ENCODE measurements at regions of chr4 and their contacts with region 1.

Region 1: DNA sequence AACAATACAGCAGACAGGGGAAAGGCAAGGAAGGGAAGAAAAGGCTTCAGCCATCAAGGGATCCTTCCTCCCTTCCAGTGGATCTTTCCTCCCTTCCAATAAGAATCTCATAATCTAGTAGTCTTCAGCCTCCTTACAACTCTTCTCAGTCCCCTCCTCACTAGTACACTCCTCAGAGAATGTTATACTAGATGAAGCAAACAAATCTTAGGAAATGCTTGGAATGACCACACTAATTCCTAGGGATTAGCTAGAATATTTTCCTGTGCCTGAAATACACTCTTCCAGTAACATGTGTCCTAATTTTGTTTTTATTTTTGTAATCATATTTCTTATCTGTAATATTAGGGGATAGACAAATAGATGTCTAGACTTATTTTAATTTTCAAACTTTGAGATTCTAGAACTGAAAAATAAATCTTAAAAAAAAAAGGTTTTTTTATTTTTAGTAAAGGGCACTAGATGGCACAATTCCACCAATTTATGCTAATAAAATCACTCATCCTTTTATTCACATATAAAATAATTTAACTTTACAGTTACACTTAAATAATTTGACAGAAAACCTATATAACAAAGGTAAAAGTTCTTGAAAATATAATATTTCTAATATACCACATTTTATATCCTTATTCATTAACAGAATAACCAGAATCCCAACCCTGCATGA is 7.0 kb upstream of the STPG2 start:
- DNase-seq: peak in 1 of 5 donors; percentile 3
- H3K4me3 ChIP-seq: no peak overlapping the region
- H3K4me3 Mint-ChIP-seq: no peak overlapping the region
- H3K27ac ChIP-seq: no peak overlapping the region
- H3K27ac Mint-ChIP-seq: no peak overlapping the region
- H3K4me1 ChIP-seq: peaks cover 16% of the 10 kb centered on the region
- H3K4me1 Mint-ChIP-seq: peaks cover 5 to 18% (median 9%) of the 10 kb centered on the region in 4 donors
- H3K27me3 ChIP-seq: no peaks in the 10 kb centered on the region
- H3K27me3 Mint-ChIP-seq: peaks cover 0 to 1% of the 10 kb centered on the region in 2 donors

Region 2: DNA sequence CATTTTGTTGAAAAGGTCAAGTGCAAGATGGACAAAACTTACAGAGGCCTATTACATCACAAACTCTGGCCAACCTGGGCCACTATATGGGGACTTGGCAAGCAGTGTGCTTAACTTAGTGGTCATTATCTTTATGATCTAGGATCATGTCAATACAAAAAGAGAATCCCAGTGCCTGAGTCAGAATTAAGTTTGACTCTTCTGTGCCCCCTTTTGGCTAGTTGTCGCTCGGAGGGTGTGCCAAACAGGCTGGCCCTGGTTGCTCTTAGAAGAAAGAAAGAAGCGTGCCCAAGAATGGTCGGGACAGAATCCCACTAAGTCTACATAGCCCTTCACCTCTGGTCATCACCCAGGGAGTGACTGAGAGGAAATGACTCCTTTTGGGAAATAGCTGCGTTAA is 678.6 kb after region 1 on chr4:
- CTCF ChIA-PET with region 1: no interaction called
- POLR2A ChIA-PET with region 1: no interaction called
- intact Hi-C with region 1: loop called (anchors 5 kb)
- DNase-seq: peak in 4 of 5 donors; percentile 6 to 27 (median 22)
- H3K4me3 ChIP-seq: no peak overlapping the region
- H3K4me3 Mint-ChIP-seq: no peak overlapping the region
- H3K27ac ChIP-seq: no peak overlapping the region
- H3K27ac Mint-ChIP-seq: no peak overlapping the region
- H3K4me1 ChIP-seq: no peaks in the 10 kb centered on the region
- H3K4me1 Mint-ChIP-seq: peaks cover 0 to 3% (median 0%) of the 10 kb centered on the region in 4 donors
- H3K27me3 ChIP-seq: no peaks in the 10 kb centered on the region
- H3K27me3 Mint-ChIP-seq: no peaks in the 10 kb centered on the region

Measured in CD4-positive, alpha-beta memory T cell (primary cell).